Tibial artery (tissue), 4 donors: ENCODE measurements at regions of chr7 and their contacts with region 1.

Region 1: DNA sequence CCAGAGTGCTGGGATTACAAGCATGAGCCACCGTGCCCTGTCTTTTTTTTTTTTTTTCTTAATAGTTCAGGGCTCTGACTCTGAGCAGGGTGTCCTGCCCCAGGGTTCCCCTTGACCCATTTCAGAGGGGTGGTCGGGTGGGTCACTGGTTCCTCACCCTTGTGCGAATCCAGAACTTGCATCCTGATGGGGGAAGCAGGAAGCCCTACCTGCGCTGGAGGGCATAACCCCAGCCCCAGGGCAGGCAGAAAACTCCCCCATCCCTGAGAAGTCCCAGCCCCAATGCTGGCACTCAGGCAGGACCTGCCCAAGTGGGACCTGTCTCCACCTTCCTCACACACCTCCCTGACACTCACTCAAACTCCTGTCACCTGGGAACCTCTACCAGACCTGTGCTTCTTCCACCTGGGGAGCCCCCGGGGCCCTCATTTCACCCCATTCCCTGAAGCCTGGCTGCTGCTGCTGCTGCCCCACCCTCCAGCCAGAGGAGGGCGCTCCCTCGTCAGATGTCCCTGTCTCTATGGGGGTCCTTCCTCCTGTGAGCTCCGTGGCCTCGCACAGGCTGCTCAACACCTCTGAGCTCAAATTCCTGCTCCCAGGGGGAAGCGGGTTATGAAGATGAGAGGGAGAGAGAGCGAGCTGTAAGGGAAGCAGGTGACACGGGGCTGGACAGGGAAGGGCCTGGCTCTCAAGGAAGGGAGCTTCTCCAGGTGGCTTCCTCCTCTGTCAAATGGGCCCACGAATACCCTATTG is 15.1 kb upstream of the ZNF273 start:
- DNase-seq: no peak
- H3K4me3 ChIP-seq: peak overlapping the region; percentile 43 to 55
- H3K27ac ChIP-seq: no peak overlapping the region
- H3K4me1 ChIP-seq: peaks cover 0 to 51% (median 23%) of the 10 kb centered on the region in 4 donors
- H3K27me3 ChIP-seq: peaks cover 0 to 2% of the 10 kb centered on the region in 2 donors
- CTCF ChIP-seq: peak in 1 of 2 experiments; percentile 21

Region 2: GRCh38 chr7:64541438-64542359 is 346.2 kb before region 1 on chr7:
- intact Hi-C with region 1: no loop called
- DNase-seq: peak; percentile 41 to 80
- H3K4me3 ChIP-seq: no peak overlapping the region
- H3K27ac ChIP-seq: peak overlapping the region; percentile 70 to 79
- H3K4me1 ChIP-seq: peaks cover 0 to 18% (median 10%) of the 10 kb centered on the region in 4 donors
- H3K27me3 ChIP-seq: no peaks in the 10 kb centered on the region
- CTCF ChIP-seq: no peak

Region 3: GRCh38 chr7:64794171-64794844 is 93.6 kb before region 1 on chr7 and contains the start of gene ZNF138:
- intact Hi-C with region 1: loop called (anchors 10 kb)
- DNase-seq: peak; percentile 96 to 97
- H3K4me3 ChIP-seq: peak within 1 kb of the TSS; percentile 67 to 92
- H3K27ac ChIP-seq: peak within 1 kb of the TSS; percentile 84 to 86
- H3K4me1 ChIP-seq: peaks cover 0 to 22% (median 9%) of the 10 kb centered on the region in 4 donors
- H3K27me3 ChIP-seq: no peaks in the 10 kb centered on the region
- CTCF ChIP-seq: peak in 1 of 2 experiments; percentile 19